Vagina (tissue), 2 donors: ENCODE measurements at regions of chr7 and their contacts with region 1.

Region 1: DNA sequence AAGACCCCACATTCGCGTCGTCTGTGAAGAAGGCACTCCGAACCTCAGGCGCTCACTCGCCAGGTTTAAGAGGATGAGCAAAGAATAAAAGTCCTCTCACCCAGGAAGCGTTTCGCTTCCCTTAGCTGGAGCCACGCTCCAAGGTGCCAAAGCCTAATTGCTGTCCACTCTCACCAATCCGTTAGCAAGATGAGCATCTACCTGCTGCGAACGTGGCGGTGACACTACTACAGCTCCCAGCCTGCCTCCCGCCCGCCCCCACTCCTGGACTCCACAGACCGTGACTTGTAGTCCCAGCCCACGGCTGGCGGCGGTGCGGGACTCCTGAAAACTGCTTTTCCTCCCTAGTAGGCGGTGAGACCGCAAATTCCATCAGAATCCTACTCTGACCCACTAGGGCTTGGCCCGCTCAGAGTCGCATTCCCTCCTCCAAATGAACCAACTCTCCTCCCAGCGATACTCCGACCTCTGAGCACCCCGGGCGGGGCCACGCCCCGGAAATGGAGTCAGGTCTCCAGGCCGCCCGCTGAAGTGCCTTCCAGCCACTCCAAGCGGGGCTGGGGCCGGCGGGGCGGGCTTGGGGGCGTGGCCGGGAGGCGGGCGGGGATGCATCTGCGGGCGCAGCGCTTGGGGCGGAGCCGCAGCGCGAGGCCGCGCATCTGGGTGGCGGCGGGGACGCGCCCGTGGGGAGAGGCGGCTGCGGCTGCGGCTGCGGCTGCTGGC is 521 bp upstream of the PTPN12 start:
- DNase-seq: peak; percentile 97 to 98
- H3K4me3 ChIP-seq: peak overlapping the region; percentile 72 to 79
- H3K27ac ChIP-seq: peak overlapping the region; percentile 89
- H3K4me1 ChIP-seq: peaks cover 33% of the 10 kb centered on the region
- H3K27me3 ChIP-seq: no peaks in the 10 kb centered on the region
- CTCF ChIP-seq: no peak
- POLR2A ChIP-seq: peak; percentile 73 to 92

Region 2: GRCh38 chr7:77415823-77416622 is 120.6 kb before region 1 on chr7 and contains the start of gene GSAP:
- intact Hi-C with region 1: loop called (anchors 10 kb)
- DNase-seq: no peak
- H3K4me3 ChIP-seq: peak within 1 kb of the TSS; percentile 64 to 75
- H3K27ac ChIP-seq: peak within 1 kb of the TSS; percentile 75
- H3K4me1 ChIP-seq: peaks cover 15% of the 10 kb centered on the region
- H3K27me3 ChIP-seq: no peaks in the 10 kb centered on the region
- CTCF ChIP-seq: no peak
- POLR2A ChIP-seq: no peak
- total RNA-seq, gene GSAP: 13.0 TPM

Region 3: DNA sequence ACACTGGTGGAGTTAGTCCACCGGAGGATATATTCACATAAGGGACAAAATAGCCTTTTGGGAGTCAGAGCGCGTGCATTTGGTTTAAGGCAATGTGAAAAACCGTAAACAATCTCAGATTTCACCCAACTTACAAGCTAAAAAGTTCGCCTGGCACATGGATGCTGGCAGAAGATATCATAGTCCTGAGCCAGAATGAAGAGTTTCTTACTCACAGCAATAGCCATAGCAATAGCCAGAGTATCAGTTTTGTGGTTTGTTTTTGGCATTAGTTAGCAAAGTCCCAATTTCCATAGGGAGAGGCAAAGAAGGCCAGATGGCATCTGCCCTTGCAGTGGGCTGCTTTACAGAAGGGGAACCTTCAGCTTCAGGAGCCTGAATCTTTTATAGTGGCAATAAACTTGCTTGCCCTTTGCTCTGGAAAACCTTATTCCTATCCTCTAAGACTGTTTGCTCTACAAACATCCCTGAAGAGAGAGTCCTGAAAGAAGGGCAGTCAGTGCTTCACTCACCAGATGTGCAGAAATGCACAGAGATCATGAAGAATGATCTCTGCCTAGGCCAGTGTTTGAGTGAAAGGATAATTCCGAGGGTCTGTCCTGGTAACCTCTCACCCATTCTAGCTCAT is 131.0 kb after region 1 on chr7:
- intact Hi-C with region 1: no loop called
- DNase-seq: no peak
- H3K4me3 ChIP-seq: no peak overlapping the region
- H3K27ac ChIP-seq: no peak overlapping the region
- H3K4me1 ChIP-seq: peaks cover 4% of the 10 kb centered on the region
- H3K27me3 ChIP-seq: no peaks in the 10 kb centered on the region
- CTCF ChIP-seq: no peak
- POLR2A ChIP-seq: no peak

Region 4: GRCh38 chr7:77846317-77847092 is 309.9 kb after region 1 on chr7:
- intact Hi-C with region 1: no loop called
- DNase-seq: no peak
- H3K4me3 ChIP-seq: no peak overlapping the region
- H3K27ac ChIP-seq: no peak overlapping the region
- H3K4me1 ChIP-seq: no peaks in the 10 kb centered on the region
- H3K27me3 ChIP-seq: no peaks in the 10 kb centered on the region
- CTCF ChIP-seq: no peak
- POLR2A ChIP-seq: no peak